ENCODE measurements at regions of chr2 and their contacts with region 1.

Region 1: GRCh38 chr2:117835990-117836760 is 21.7 kb downstream of the DDX18 start:
- DNase-seq: peak; percentile 91
- H3K4me3 ChIP-seq: peak overlapping the region; percentile 25 to 57 (median 52)
- H3K27ac ChIP-seq: peak overlapping the region; percentile 60 to 69 (median 64)
- H3K4me1 ChIP-seq: peaks cover 0 to 14% (median 6%) of the 10 kb centered on the region in 4 donors
- H3K27me3 ChIP-seq: no peaks in the 10 kb centered on the region
- CTCF ChIP-seq: peak; percentile 52 to 85 (median 64)
- EP300 ChIP-seq: no peak
- POLR2A ChIP-seq: no peak

Region 2: DNA sequence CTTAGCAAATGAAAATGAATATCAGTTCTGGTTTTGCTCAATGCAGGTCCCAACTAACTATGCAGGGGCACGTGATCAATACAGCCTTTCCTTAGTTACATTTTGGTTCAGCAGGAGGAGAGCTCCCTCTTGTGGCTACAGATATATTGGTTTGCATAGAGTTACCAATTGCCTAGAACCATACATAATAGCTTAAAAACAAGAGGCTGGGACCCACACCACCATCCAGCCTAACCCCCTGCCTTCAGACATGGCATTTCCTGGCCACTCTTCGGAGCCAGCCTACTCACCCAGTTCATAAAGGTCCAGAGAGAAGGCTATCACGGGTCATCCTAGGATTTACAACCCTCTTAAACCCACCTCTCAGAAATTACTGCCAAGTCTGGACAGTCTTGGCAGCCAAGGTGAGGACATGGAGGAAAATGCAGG is 167.2 kb after region 1 on chr2:
- intact Hi-C with region 1: loop called (anchors 5 kb)
- DNase-seq: peak; percentile 68
- H3K4me3 ChIP-seq: no peak overlapping the region
- H3K27ac ChIP-seq: peak overlapping the region in 2 of 4 donors; percentile 19 to 39
- H3K4me1 ChIP-seq: peaks cover 0 to 9% (median 6%) of the 10 kb centered on the region in 4 donors
- H3K27me3 ChIP-seq: no peaks in the 10 kb centered on the region
- CTCF ChIP-seq: peak; percentile 19 to 82 (median 70)
- EP300 ChIP-seq: no peak
- POLR2A ChIP-seq: no peak